CD4-positive, alpha-beta memory T cell (primary cell): ENCODE measurements at regions of chr4 and their contacts with region 1.

Region 1: GRCh38 chr4:168831919-168832762 is 177.9 kb downstream of the CBR4 start:
- DNase-seq: peak; percentile 38 to 52 (median 47)
- H3K4me3 ChIP-seq: peak overlapping the region; percentile 34 to 53
- H3K4me3 Mint-ChIP-seq: peak overlapping the region; percentile 77 to 92 (median 86)
- H3K27ac ChIP-seq: no peak overlapping the region
- H3K27ac Mint-ChIP-seq: peak overlapping the region in 1 of 7 donors; percentile 10
- H3K4me1 ChIP-seq: peaks cover 13% of the 10 kb centered on the region
- H3K4me1 Mint-ChIP-seq: peaks cover 5 to 19% (median 11%) of the 10 kb centered on the region in 4 donors
- H3K27me3 ChIP-seq: peaks cover 23% of the 10 kb centered on the region
- H3K27me3 Mint-ChIP-seq: peaks cover 38 to 51% of the 10 kb centered on the region in 2 donors

Region 2: DNA sequence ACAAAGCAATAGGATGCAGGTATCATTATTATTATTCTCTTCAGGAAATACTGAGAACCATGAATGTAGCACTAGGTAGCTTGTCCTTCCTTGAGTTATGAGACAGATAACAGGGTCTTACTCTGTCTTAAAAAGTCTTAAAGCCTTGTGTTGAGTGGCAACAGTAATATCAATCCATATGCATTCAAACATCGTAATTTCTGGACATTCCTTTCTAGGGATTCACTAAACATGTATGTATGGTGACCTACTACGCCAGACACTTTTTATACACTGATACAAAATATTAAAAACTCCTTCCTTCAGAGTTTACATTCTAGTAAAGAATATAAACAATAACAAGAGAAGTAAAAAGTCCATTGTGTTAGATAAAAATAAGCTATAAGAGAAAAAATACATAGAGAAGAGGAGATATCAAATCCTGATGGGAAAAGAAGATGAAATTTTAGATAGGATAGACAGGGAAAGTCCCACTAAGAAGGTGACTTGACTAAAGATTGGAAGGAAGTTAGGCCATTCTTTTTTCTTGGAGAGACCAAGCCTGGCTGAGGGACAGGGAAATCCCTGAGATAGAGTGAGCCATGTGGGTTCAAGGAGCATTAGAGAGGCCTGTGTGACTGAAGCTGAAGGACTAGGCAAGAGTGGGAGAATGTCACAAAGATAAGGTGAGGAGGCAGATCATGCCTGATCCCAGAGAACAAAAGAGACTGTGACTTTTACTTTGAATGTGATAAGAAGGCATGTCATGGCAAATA is 346.8 kb before region 1 on chr4:
- CTCF ChIA-PET with region 1: no interaction called
- POLR2A ChIA-PET with region 1: no interaction called
- intact Hi-C with region 1: no loop called
- DNase-seq: no peak
- H3K4me3 ChIP-seq: no peak overlapping the region
- H3K4me3 Mint-ChIP-seq: no peak overlapping the region
- H3K27ac ChIP-seq: no peak overlapping the region
- H3K27ac Mint-ChIP-seq: no peak overlapping the region
- H3K4me1 ChIP-seq: peaks cover 25% of the 10 kb centered on the region
- H3K4me1 Mint-ChIP-seq: peaks cover 26 to 43% (median 36%) of the 10 kb centered on the region in 4 donors
- H3K27me3 ChIP-seq: no peaks in the 10 kb centered on the region
- H3K27me3 Mint-ChIP-seq: no peaks in the 10 kb centered on the region

Region 3: DNA sequence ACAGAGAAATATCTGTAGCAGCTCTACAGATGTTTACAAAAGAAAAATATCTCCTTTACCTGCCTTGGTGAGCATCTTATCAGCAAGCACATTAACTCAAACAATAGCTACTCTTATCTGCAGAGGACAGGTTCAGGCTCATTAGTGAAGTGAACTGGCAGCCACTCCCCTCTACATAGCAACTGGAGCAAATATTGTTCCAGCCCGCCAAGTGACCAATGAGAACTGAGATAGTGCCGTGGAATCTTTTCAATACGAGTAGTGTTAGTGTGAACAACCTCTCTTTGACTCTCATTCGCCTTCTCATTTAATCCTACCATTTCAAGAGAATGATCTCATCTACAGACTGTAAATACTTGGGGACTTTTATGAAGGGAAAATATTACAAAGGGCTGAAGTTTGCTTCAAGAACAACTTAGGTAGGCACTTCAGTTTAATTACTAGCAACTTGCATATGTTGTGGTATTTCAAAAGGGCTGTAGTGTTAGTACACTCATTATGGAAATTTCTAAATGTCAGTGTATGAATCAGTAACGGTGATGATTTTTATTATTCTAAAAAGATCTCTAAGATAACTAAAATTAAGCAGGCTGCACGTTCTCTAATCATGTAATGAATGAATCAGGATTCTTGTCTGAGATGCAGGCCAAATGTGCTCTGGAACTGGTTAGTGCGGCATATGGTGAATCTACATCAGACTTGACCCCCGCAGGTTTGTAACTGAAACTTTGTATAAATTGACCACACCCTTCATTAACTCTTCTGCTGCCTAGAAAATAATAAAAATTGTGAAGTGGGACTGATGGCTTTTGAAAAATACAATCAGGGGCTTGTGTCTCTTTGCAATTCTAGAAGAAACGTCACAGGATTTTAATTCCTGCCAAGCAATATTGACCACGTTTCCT is 262.8 kb before region 1 on chr4:
- CTCF ChIA-PET with region 1: no interaction called
- POLR2A ChIA-PET with region 1: no interaction called
- intact Hi-C with region 1: no loop called
- DNase-seq: no peak
- H3K4me3 ChIP-seq: no peak overlapping the region
- H3K4me3 Mint-ChIP-seq: no peak overlapping the region
- H3K27ac ChIP-seq: no peak overlapping the region
- H3K27ac Mint-ChIP-seq: peak overlapping the region in 1 of 7 donors; percentile 23
- H3K4me1 ChIP-seq: no peaks in the 10 kb centered on the region
- H3K4me1 Mint-ChIP-seq: no peaks in the 10 kb centered on the region
- H3K27me3 ChIP-seq: no peaks in the 10 kb centered on the region
- H3K27me3 Mint-ChIP-seq: peaks cover 8 to 10% of the 10 kb centered on the region in 2 donors

Region 4: DNA sequence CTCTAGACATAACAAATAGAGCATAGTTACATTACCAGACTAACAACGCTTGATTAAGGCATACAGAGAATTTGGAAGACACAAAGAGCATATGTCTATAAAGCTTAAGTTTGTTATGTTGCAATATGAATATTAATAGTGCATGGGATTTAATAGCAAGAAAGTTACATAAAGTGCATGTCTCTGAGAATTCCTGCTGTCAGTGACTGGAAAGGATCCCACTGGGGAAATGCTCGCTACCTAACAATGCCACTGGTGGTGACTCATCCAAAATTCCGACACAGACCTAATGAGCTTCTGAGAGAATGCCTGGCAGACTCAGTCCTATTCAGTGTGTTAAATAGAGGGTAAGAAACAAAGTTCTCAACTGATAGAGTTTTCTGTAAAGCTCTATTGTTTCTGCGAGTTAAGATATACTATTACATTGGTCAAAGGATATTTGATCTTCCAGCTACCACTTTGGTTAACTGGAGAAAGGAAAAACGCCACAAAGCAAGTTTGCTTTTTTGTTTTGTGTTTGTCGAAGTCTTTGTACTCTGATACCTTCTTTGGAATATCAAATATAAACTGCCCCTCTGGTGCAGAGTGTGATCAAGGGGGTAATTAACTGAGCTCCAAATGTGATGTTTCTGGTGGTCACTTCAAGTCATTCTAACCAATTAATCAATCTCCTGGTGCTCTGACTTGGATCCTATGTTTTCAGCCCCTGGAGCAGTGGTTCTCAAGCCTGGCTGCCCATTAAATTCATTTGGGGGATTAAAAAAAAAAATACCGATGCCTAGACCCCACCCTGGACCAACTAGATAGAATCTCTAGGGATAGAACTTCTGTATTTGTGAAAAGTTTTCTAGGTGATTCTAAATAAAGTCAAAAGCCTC is 227.4 kb before region 1 on chr4:
- CTCF ChIA-PET with region 1: no interaction called
- POLR2A ChIA-PET with region 1: no interaction called
- intact Hi-C with region 1: no loop called
- DNase-seq: no peak
- H3K4me3 ChIP-seq: no peak overlapping the region
- H3K4me3 Mint-ChIP-seq: no peak overlapping the region
- H3K27ac ChIP-seq: no peak overlapping the region
- H3K27ac Mint-ChIP-seq: no peak overlapping the region
- H3K4me1 ChIP-seq: no peaks in the 10 kb centered on the region
- H3K4me1 Mint-ChIP-seq: no peaks in the 10 kb centered on the region
- H3K27me3 ChIP-seq: no peaks in the 10 kb centered on the region
- H3K27me3 Mint-ChIP-seq: peaks cover 3 to 9% of the 10 kb centered on the region in 2 donors

Region 5: GRCh38 chr4:168815379-168816345 is 16.5 kb before region 1 on chr4:
- CTCF ChIA-PET with region 1: interaction called, 5 read pairs
- POLR2A ChIA-PET with region 1: interaction called, 6 read pairs
- intact Hi-C with region 1: loop called (anchors 2 kb)
- DNase-seq: no peak
- H3K4me3 ChIP-seq: no peak overlapping the region
- H3K4me3 Mint-ChIP-seq: no peak overlapping the region
- H3K27ac ChIP-seq: no peak overlapping the region
- H3K27ac Mint-ChIP-seq: no peak overlapping the region
- H3K4me1 ChIP-seq: no peaks in the 10 kb centered on the region
- H3K4me1 Mint-ChIP-seq: peaks cover 0 to 7% (median 5%) of the 10 kb centered on the region in 4 donors
- H3K27me3 ChIP-seq: no peaks in the 10 kb centered on the region
- H3K27me3 Mint-ChIP-seq: peaks cover 17 to 23% of the 10 kb centered on the region in 2 donors